Posterior cingulate gyrus (tissue), 11 donors: ENCODE measurements at regions of chr12 and their contacts with region 1.

Region 1: GRCh38 chr12:110100315-110100970 is 23.7 kb upstream of the IFT81 start:
- DNase-seq: peak in 9 of 10 donors; percentile 42 to 95 (median 78)

Region 2: DNA sequence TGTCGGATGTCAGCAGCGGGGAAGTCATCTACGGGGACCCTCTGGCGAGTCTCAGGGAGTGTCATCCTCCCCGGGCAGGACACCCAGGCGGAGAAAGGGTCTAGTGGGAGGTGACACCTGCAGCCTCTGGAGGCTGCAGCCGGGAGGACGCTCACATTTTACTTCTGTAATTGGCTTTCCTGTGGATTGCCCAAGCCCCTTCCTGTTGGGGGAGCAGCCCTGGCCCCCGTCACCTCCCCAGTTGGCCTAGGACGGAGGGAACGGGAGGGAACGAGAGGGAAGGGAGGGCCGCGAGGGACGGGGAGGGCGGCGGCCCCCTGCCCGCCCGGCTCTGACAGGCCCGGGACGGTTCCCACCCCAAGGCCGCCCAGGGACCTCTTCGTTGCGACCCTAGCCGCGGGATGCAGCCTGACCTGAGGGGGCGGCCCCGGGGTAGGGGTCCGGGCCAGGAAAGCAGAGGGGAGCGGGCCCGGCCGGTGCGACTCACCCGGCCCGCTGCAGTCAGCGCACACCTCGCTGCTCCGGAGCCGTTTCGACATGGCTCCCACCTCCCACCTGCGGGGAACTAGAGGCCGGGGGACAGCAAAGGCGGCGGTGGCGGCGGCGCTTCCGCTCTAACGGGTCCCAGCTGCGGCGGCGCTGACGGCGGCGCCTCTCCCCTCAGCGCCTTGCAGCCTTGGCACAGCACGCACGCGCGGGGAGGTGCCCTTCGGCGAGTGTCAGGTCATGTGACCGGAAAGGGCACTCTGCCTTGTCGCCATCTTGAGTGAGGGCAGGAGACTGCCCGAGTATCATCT is 104.6 kb before region 1 on chr12 and contains the start of gene GIT2:
- intact Hi-C with region 1: no loop called
- DNase-seq: peak; percentile 91 to 99 (median 95)

Region 3: DNA sequence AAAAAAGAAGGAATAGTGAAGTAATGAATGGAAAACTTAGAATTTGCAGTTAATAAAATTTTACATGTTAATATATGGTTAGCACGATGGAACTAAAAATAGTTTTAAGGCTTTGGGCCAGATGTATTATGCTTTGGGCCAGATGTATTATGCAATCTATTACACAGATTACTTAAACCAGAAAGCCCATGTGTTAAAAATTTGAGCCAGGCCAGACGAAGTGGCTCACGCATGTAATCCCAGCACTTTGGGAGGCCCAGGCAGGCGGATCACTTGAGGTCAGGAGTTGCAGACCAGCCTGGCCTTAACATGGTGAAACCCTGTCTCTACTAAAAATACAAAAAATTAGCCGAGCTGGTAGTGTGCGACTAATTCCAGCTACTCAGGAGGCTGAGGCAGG is 40.9 kb after region 1 on chr12:
- intact Hi-C with region 1: no loop called
- DNase-seq: no peak

Region 4: DNA sequence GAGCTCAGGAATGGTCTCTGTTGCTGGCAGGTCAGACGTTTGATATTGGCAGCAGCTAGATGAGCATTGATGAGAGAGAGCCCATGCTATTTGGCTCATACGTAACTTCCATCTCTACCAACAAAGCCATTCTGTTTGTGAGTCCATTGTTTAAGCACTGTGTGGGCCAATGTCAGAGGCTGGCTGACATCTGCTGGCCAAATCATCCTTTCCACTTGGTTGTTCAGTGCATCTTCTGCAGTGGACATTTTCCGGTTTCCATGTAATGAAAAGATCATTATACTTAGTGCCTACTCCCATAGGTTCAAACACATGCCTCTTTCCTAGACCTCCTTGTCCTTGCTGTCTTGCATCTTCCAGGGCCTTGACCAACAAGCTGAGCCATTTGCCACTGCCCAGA is 82.9 kb after region 1 on chr12:
- intact Hi-C with region 1: loop called (anchors 2 kb)
- DNase-seq: peak in 6 of 10 donors; percentile 28 to 92 (median 50)

Region 5: GRCh38 chr12:110431957-110432587 is 331.6 kb after region 1 on chr12:
- intact Hi-C with region 1: loop called (anchors 1 kb)
- DNase-seq: peak in 1 of 10 donors; percentile 47